Activated CD4-positive, alpha-beta memory T cell treated with anti-CD3 and anti-CD28 coated beads for 36 hours (primary cell): ENCODE measurements at regions of chr5 and their contacts with region 1.

Region 1: GRCh38 chr5:142888469-142889085 is 118.4 kb downstream of the ARHGAP26 start:
- DNase-seq: no peak
- H3K4me3 Mint-ChIP-seq: no peak overlapping the region
- H3K27ac Mint-ChIP-seq: no peak overlapping the region
- H3K4me1 Mint-ChIP-seq: no peaks in the 10 kb centered on the region
- H3K27me3 Mint-ChIP-seq: no peaks in the 10 kb centered on the region

Region 2: DNA sequence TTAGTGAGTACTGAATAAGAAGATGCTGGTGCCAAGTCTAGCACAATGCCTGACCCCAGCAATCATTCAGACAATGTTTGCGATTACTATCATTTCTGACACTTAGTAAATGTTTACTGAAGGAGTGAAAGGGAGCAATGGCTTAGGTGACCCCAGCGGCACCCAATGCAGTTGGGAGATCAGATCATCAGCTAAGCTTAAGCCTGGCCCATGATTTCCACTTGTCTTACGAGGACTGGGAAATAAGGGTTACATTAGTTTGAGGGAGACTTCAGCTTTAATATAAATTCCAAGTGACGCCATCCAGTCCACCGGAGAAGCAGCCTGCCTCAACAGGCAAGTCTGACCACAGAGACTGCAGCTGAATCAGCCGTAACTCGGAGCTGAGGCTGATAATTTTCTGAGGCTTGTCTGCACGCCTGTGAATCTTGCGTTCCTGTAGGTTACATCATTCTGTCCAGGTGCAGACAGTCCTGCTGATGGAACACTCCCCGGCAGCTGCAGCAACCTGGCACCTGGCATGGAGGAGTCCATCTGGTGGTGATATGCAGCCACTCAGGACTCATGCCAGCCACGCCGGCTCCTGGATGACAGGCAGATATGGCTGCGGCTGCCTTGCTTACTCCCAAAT is 167.8 kb before region 1 on chr5:
- CTCF ChIA-PET with region 1: interaction called, 246 read pairs
- POLR2A ChIA-PET with region 1: no interaction called
- intact Hi-C with region 1: loop called (anchors 1 kb)
- DNase-seq: no peak
- H3K4me3 Mint-ChIP-seq: no peak overlapping the region
- H3K27ac Mint-ChIP-seq: no peak overlapping the region
- H3K4me1 Mint-ChIP-seq: no peaks in the 10 kb centered on the region
- H3K27me3 Mint-ChIP-seq: no peaks in the 10 kb centered on the region

Region 3: DNA sequence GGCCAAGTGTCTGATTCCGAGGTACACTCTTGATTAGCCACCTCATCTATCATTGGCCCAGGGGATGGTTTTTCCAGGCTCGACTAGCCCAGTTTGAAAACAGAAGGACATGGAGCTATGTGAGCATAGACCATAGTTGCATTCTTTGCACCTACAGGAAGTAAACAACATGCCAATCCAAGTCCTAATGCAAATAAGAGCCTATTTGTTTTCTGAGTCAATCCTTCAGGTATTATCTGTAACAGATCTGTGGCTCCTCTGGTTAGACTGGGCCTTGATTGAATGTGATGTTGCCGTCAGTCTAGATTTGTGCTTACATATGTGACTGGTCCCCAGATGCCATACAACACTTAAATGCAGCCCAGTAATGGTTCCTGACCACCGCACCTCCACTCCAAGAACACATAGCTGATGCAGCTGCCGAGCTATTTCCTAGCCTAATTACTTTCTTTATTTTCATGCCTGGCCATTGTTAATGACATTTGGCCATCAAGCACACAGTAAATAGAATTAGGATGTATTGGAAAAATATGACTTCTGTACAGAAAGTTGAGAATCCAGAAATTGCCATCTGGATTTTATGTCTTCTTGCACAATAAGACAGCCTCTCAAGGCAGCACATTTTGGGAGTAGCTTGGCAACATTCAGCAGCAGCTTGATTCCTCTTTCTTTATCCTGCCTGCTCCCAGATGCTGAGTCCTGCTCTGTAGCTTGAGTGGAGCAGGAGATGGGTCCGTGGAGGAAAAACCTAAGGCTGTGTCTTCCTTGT is 147.9 kb before region 1 on chr5:
- CTCF ChIA-PET with region 1: interaction called, 251 read pairs
- POLR2A ChIA-PET with region 1: no interaction called
- intact Hi-C with region 1: no loop called
- DNase-seq: no peak
- H3K4me3 Mint-ChIP-seq: no peak overlapping the region
- H3K27ac Mint-ChIP-seq: no peak overlapping the region
- H3K4me1 Mint-ChIP-seq: peaks cover 7% of the 10 kb centered on the region
- H3K27me3 Mint-ChIP-seq: no peaks in the 10 kb centered on the region

Region 4: DNA sequence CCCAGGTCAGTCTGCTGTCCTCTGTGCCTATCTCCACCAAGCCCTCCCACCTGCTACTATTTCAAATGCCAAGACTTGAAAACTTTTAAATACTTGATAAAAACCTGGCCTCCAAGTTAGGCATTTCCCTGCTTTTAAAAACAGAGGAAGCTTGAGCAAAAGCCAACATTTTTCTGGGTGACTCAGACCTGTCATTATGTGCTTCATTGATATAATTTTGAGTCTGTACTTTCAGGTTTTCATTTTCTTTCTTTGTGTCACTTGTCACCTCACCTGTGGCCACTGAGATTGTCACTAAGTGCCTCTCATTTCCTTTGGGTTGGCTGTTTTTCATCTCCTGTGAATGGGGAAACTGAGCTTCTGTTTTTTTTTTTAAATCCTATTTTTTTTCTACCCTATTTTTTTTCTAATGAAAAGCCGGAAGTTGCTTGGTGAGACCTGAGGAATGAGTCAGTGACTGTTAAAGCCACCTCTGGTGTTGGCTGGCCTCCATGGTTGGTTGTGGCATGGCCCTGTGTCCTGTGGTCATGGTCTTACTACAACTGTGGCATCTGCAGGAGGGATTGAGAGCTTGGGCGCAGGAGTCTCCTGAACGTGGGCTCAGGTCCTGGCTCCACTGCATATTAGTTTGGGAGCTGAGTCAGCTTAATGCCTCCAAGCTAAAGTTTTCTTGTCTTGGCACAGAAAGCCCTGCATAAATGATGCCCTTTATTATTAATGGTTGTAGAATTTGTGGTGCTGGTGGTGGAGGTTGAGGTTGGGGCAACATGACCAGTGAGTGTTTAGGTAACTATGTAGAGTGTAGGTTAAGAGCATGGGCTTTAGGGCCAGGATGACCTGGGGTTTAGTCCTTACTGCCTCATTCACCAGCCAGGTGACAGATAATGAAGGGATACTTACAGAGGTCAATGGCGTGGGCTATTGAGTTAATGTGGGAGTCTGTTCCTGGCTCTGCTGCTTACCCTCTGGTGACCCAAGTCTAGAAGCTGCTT is 61.5 kb before region 1 on chr5:
- CTCF ChIA-PET with region 1: no interaction called
- POLR2A ChIA-PET with region 1: no interaction called
- intact Hi-C with region 1: no loop called
- DNase-seq: peak; percentile 73
- H3K4me3 Mint-ChIP-seq: no peak overlapping the region
- H3K27ac Mint-ChIP-seq: peak overlapping the region; percentile 55
- H3K4me1 Mint-ChIP-seq: peaks cover 64% of the 10 kb centered on the region
- H3K27me3 Mint-ChIP-seq: no peaks in the 10 kb centered on the region

Region 5: DNA sequence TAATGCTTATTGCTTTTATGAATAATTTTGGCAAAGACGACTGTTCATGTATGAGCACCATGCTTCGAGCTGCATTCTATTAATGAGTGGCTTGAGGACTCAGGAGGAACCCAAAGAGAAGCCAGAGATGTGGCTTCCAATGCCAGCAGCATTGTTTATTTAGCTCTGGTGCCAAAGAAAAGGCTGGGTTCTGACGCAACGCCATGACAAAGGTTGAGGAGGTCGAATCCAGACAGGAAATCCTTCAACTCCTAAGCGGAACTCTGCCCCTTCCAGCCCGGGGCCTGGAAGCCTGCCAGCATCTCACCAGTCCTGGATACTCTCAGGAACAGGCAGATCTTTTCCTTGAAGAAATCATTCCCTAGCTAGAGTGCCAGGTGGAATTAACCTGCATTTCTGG is 14.0 kb before region 1 on chr5:
- CTCF ChIA-PET with region 1: interaction called, 57 read pairs
- POLR2A ChIA-PET with region 1: no interaction called
- intact Hi-C with region 1: no loop called
- DNase-seq: no peak
- H3K4me3 Mint-ChIP-seq: no peak overlapping the region
- H3K27ac Mint-ChIP-seq: no peak overlapping the region
- H3K4me1 Mint-ChIP-seq: no peaks in the 10 kb centered on the region
- H3K27me3 Mint-ChIP-seq: no peaks in the 10 kb centered on the region

Region 6: DNA sequence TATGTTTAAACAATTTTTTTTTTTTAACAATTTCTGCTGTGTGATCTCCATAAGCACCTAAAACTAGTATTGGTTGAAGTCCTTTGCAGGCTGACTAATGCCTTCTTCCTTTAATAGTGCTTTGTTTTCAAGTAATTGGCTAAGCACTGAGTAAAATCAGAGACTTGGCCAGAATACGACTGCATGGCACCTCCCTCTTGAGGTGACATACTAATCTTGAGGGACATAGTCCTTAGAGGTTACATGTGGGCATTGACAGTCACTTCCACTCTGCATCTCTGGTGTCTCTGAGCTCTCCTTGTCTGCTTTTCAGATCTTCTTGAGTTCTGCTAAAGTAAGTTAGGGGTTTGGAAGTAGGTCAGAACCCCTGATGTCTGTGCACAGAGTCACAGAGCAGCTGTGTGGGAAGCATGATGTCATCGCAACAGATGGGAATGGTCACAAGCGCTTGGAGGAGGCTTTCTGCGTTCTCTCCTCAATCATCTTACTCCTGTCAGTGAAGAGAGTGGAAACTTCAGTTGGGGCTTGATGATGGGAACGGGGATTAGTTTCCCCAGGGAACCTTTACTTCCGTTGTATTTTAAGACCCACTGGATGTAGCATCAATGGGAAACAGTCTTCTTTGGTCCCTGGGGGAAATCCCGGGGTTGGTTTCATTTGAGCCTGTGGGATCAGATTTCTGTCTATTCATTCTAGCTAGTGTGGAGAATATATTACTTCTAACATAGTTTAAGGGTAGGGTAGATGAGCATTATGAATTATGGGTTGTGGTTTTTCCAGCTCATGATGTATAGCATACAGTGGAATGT is 18.5 kb after region 1 on chr5:
- CTCF ChIA-PET with region 1: interaction called, 10 read pairs
- POLR2A ChIA-PET with region 1: no interaction called
- intact Hi-C with region 1: no loop called
- DNase-seq: no peak
- H3K4me3 Mint-ChIP-seq: no peak overlapping the region
- H3K27ac Mint-ChIP-seq: no peak overlapping the region
- H3K4me1 Mint-ChIP-seq: no peaks in the 10 kb centered on the region
- H3K27me3 Mint-ChIP-seq: no peaks in the 10 kb centered on the region

Region 7: DNA sequence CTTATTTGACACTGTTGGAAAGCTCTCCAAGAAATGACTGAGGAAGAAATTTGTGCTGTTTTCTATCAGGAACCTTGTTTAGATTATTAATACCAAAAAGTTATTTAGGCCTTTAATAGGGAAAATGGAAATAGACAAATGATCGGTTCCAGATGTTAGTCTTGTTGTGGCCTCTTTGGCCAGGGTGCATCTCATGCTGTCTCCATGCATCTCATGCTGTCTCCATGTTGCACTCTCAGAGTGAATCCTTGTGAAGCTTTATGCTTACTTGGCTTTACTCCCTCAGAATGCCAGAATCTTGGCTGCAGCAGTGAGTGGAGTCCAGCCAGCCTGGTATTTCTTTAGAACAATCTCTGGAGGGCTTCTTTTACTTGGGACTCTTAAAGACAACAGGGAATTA is 67.1 kb after region 1 on chr5:
- CTCF ChIA-PET with region 1: no interaction called
- POLR2A ChIA-PET with region 1: no interaction called
- intact Hi-C with region 1: no loop called
- DNase-seq: no peak
- H3K4me3 Mint-ChIP-seq: no peak overlapping the region
- H3K27ac Mint-ChIP-seq: no peak overlapping the region
- H3K4me1 Mint-ChIP-seq: peaks cover 17% of the 10 kb centered on the region
- H3K27me3 Mint-ChIP-seq: no peaks in the 10 kb centered on the region